Naive thymus-derived CD4-positive, alpha-beta T cell (primary cell): ENCODE measurements at regions of chr10 and their contacts with region 1.

Region 1: GRCh38 chr10:48317321-48317990 is 11.0 kb downstream of the MAPK8 start:
- DNase-seq: no peak
- ATAC-seq: no peak
- H3K4me3 ChIP-seq: no peak overlapping the region
- H3K4me3 Mint-ChIP-seq: no peak overlapping the region
- H3K27ac ChIP-seq: no peak overlapping the region
- H3K27ac Mint-ChIP-seq: no peak overlapping the region
- H3K4me1 ChIP-seq: peaks cover 0 to 12% of the 10 kb centered on the region in 2 donors
- H3K4me1 Mint-ChIP-seq: peaks cover under 1 to 48% (median 36%) of the 10 kb centered on the region in 7 donors
- H3K27me3 ChIP-seq: no peaks in the 10 kb centered on the region
- H3K27me3 Mint-ChIP-seq: no peaks in the 10 kb centered on the region

Region 2: GRCh38 chr10:48289501-48290238 is 27.8 kb before region 1 on chr10:
- CTCF ChIA-PET with region 1: no interaction called
- POLR2A ChIA-PET with region 1: no interaction called
- intact Hi-C with region 1: loop called in 1 of 2 experiments (anchors 1 kb)
- DNase-seq: peak in 7 of 9 donors; percentile 13 to 55 (median 24)
- ATAC-seq: peak; percentile 84
- H3K4me3 ChIP-seq: no peak overlapping the region
- H3K4me3 Mint-ChIP-seq: no peak overlapping the region
- H3K27ac ChIP-seq: no peak overlapping the region
- H3K27ac Mint-ChIP-seq: peak overlapping the region in 1 of 9 donors; percentile 36
- H3K4me1 ChIP-seq: no peaks in the 10 kb centered on the region
- H3K4me1 Mint-ChIP-seq: peaks cover 0 to 18% (median 9%) of the 10 kb centered on the region in 7 donors
- H3K27me3 ChIP-seq: no peaks in the 10 kb centered on the region
- H3K27me3 Mint-ChIP-seq: peaks cover 14 to 23% (median 16%) of the 10 kb centered on the region in 5 donors

Region 3: GRCh38 chr10:48533951-48534720 is 216.7 kb after region 1 on chr10:
- CTCF ChIA-PET with region 1: no interaction called
- POLR2A ChIA-PET with region 1: no interaction called
- intact Hi-C with region 1: no loop called
- DNase-seq: no peak
- ATAC-seq: no peak
- H3K4me3 ChIP-seq: no peak overlapping the region
- H3K4me3 Mint-ChIP-seq: no peak overlapping the region
- H3K27ac ChIP-seq: no peak overlapping the region
- H3K27ac Mint-ChIP-seq: no peak overlapping the region
- H3K4me1 ChIP-seq: no peaks in the 10 kb centered on the region
- H3K4me1 Mint-ChIP-seq: no peaks in the 10 kb centered on the region
- H3K27me3 ChIP-seq: no peaks in the 10 kb centered on the region
- H3K27me3 Mint-ChIP-seq: peaks cover 0 to 20% (median 2%) of the 10 kb centered on the region in 5 donors